HepG2 (cell line): ENCODE measurements at regions of chr1 and their contacts with region 1.

Region 1: DNA sequence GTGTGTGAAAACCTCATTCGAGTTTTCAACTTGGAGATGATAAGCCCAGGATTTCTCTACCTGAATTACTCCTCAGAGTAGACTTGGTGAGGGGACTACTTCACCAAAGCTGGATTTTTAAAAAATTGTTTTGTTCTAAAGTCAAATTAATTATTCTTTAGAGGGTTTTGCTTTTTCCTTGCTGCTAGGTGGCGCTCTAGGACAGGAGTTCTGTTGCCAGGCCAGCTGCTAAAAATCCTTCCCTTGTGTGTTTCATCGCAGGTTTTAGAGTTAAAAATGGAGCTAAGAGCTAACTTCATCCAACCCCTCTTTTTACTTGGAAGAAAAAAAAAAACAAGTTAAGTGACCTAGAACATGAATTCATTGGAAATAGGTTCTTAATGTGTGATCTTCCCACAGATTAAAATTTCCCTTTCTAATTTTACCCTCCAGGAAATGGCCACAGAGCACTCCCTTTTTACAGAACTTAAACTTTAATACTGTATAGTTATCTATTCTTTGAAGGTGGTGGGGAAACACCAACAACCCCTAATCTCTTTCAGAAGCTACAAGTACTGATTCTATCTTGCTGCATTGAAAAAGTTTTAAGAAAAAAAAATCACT is 36.7 kb upstream of the FAM163A start:
- DNase-seq: peak; percentile 46
- ATAC-seq: no peak
- H3K4me3 ChIP-seq: no peak overlapping the region
- H3K27ac ChIP-seq: no peak overlapping the region
- H3K4me1 ChIP-seq: no peaks in the 10 kb centered on the region
- H3K27me3 ChIP-seq: peaks cover 0 to 11% of the 10 kb centered on the region in 2 experiments; a peak in 1 of 5 replicates
- CTCF ChIP-seq: peak; percentile 69
- EP300 ChIP-seq: no peak
- POLR2A ChIP-seq: no peak
- RAD21 ChIP-seq: peak; percentile 62; the same call in 1 of the 2 replicates

Region 2: GRCh38 chr1:179731628-179732027 is 25.2 kb after region 1 on chr1:
- CTCF ChIA-PET with region 1: no interaction called
- POLR2A ChIA-PET with region 1: no interaction called
- in situ Hi-C with region 1: no loop called
- intact Hi-C with region 1: no loop called
- DNase-seq: no peak
- ATAC-seq: no peak
- H3K4me3 ChIP-seq: no peak overlapping the region
- H3K27ac ChIP-seq: no peak overlapping the region
- H3K4me1 ChIP-seq: no peaks in the 10 kb centered on the region
- H3K27me3 ChIP-seq: peaks cover 0 to 17% of the 10 kb centered on the region in 2 experiments; a peak in 2 of 5 replicates
- CTCF ChIP-seq: no peak
- EP300 ChIP-seq: no peak
- POLR2A ChIP-seq: no peak
- RAD21 ChIP-seq: no peak

Region 3: DNA sequence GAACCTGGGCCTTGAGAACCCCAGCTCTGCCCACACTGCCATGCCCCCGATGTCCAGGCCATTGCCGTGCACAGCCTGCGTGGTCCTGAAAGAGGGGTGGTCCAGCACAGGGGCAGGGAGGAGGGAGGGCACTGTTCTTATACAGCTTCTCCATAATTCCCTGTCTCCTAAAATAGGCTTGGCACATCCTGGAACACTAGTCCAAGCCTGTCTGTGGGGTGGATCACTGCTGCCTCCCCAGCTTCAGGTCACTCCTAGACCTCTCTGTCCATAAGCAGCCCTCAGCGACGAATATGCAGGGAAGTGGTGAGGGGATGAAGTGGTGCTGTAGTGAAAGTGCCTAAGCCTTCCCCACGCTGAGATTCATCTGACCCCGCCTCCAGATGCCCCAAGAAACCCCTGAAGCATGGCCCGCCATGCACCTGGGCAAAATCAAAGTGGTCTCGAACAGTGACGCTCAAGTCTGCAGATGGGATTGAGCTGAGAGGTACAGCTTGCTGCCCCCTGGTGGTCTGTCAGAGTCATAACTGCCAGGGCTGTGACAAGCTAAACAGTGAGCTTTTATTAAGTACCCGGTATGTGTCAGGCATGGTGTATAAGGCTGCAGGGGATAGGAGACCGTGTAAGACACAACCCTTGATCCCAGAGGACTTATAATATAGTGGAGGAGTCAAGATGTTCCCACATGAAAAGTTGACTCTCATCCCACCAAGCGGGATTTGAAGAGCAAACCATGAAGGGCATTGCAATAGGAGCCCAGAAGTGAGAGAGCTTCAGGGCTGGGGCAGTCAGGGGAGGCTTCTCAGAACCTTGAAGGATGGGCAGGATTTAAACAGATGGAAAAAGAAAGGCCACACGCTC is 103.3 kb after region 1 on chr1:
- CTCF ChIA-PET with region 1: interaction called, 43 read pairs
- POLR2A ChIA-PET with region 1: no interaction called
- in situ Hi-C with region 1: no loop called
- intact Hi-C with region 1: loop called (anchors 1 kb)
- DNase-seq: peak; percentile 60
- ATAC-seq: peak; percentile 72
- H3K4me3 ChIP-seq: no peak overlapping the region
- H3K27ac ChIP-seq: no peak overlapping the region
- H3K4me1 ChIP-seq: peaks cover 15% of the 10 kb centered on the region
- H3K27me3 ChIP-seq: peaks cover 16 to 48% of the 10 kb centered on the region in 2 experiments; a peak in 4 of 5 replicates
- CTCF ChIP-seq: peak; percentile 88
- EP300 ChIP-seq: no peak
- POLR2A ChIP-seq: no peak
- RAD21 ChIP-seq: no peak

Region 4: DNA sequence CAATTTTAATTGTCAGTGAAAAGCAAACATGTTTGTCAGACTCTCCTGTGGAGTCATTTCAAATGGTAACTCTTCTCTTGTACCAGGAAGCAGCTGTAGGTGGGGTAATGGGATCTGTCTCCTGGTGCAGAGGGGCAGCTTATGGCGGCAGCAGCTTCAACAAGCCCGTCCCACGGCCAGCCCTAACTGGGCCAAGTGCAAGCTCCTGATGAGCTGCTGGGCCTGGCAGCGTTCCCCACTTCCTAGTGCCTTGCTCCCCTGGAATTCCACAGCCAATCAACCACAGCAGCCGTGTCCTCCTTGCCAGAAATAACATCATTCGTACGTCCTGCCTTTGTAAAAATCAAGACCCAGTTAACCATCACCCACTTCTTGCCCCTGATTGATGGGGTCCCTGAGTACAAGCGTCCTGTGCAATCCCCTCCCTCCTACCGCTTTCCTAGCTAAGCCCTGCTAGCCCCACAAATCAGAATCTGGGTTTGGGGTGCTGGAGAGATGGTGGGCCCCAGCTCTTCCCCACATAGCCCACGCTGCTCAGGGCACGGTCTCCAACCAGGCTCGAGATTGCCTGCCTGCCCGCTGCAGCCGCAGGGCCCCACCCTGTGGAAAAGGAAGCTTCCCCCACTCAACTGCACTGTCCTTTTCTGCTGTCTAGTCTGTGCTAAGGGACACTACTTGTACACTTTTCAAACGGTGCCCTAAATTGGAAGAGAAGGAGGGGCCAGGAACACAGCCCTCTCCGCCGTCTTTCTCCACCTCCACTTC is 109.9 kb after region 1 on chr1:
- CTCF ChIA-PET with region 1: interaction called, 8 read pairs
- POLR2A ChIA-PET with region 1: no interaction called
- in situ Hi-C with region 1: loop called (anchors 5 kb)
- intact Hi-C with region 1: no loop called
- DNase-seq: no peak
- ATAC-seq: no peak
- H3K4me3 ChIP-seq: no peak overlapping the region
- H3K27ac ChIP-seq: no peak overlapping the region
- H3K4me1 ChIP-seq: peaks cover 20% of the 10 kb centered on the region
- H3K27me3 ChIP-seq: peaks cover 25 to 78% of the 10 kb centered on the region in 2 experiments
- CTCF ChIP-seq: no peak
- EP300 ChIP-seq: no peak
- POLR2A ChIP-seq: no peak
- RAD21 ChIP-seq: no peak

Region 5: DNA sequence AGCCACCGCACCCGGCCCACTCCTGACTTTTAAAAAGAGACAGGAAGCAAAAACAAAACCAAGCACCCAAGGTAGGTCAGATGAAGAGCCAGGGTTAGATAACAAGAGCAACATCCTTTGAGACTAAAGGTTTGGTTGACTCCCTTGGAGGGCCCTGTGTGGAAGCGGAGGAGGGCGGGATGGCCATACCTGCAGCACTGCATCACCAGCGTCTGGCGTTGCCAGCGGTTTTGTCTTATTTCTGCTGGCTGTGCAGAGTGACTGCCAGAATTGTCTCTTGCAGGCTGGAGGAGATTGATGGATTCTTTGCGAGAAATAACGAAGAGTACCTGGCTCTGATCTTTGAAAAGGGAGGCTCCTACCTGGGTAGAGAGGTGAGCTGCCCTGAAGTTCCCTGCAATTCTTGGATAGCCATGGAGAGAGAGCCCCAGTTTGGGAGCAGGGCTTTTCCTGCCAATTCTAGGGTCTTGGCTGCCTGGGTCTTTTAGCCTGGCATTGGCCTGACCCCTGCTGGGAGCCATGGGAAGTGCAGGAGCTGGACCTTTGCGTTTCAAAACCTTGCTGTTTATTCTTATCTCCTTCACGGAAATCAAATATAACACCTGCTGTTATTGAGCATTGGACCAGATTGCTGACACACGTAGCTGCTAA is 472.2 kb after region 1 on chr1:
- CTCF ChIA-PET with region 1: interaction called, 7 read pairs
- POLR2A ChIA-PET with region 1: no interaction called
- in situ Hi-C with region 1: loop called (anchors 10 kb)
- intact Hi-C with region 1: loop called (anchors 2 kb)
- DNase-seq: peak; percentile 25
- ATAC-seq: peak; percentile 63
- H3K4me3 ChIP-seq: no peak overlapping the region
- H3K27ac ChIP-seq: no peak overlapping the region
- H3K4me1 ChIP-seq: no peaks in the 10 kb centered on the region
- H3K27me3 ChIP-seq: no peaks in the 10 kb centered on the region
- CTCF ChIP-seq: peak; percentile 89
- EP300 ChIP-seq: no peak
- POLR2A ChIP-seq: no peak
- RAD21 ChIP-seq: peak; percentile 80

Region 6: DNA sequence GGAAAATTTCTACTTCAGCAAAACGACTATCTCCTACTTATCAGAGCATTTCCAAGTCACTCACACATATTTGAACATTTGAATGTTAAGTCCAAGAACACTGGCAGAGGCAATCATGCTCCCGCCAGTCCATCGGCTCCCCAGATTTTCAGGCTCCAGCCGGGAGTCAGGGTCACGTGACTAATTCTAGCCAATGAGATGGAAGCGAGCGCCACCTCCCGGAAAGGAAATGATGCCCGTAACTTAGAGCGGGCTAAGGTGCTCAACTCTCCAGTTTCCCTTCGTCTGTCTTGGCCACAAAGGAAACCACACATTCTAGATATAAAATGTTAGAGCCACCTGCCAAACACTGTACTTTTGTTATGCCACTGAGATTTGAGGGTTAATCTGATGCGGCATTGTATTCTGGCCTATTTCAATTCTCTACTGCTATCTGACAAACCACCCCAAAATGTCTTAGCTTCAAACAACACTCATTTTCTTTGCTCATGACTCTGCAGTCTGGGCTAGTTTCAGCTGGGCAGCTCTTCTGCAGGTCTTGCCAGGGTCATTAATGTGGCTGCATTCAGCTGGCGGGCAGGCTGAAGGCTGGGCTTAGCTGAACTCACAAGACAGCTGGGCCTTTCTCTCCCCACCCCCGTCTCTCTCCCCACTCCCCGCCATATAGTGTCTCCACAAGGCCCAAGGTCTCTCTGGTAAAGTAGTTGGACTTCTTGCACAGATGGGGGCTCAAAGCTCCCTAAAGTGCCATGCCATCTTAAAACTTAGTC is 507.1 kb after region 1 on chr1:
- CTCF ChIA-PET with region 1: no interaction called
- POLR2A ChIA-PET with region 1: no interaction called
- in situ Hi-C with region 1: no loop called
- intact Hi-C with region 1: no loop called
- DNase-seq: no peak
- ATAC-seq: no peak
- H3K4me3 ChIP-seq: no peak overlapping the region
- H3K27ac ChIP-seq: no peak overlapping the region
- H3K4me1 ChIP-seq: no peaks in the 10 kb centered on the region
- H3K27me3 ChIP-seq: peaks cover 3 to 26% of the 10 kb centered on the region in 2 experiments; a peak in 2 of 5 replicates
- CTCF ChIP-seq: no peak
- EP300 ChIP-seq: no peak
- POLR2A ChIP-seq: no peak
- RAD21 ChIP-seq: no peak